ENCODE measurements at regions of chr1 and their contacts with region 1.

Region 1: GRCh38 chr1:212608209-212608955 is at the start of gene ATF3:
- DNase-seq: peak; percentile 100
- H3K4me3 Mint-ChIP-seq: peak within 1 kb of the TSS; percentile 72
- H3K27ac Mint-ChIP-seq: peak within 1 kb of the TSS; percentile 98
- H3K4me1 Mint-ChIP-seq: peaks cover 37% of the 10 kb centered on the region
- H3K27me3 Mint-ChIP-seq: peaks cover 75% of the 10 kb centered on the region
- CTCF ChIP-seq: no peak
- total RNA-seq, gene ATF3: 85.3 and 114 TPM in 2 replicates

Region 2: DNA sequence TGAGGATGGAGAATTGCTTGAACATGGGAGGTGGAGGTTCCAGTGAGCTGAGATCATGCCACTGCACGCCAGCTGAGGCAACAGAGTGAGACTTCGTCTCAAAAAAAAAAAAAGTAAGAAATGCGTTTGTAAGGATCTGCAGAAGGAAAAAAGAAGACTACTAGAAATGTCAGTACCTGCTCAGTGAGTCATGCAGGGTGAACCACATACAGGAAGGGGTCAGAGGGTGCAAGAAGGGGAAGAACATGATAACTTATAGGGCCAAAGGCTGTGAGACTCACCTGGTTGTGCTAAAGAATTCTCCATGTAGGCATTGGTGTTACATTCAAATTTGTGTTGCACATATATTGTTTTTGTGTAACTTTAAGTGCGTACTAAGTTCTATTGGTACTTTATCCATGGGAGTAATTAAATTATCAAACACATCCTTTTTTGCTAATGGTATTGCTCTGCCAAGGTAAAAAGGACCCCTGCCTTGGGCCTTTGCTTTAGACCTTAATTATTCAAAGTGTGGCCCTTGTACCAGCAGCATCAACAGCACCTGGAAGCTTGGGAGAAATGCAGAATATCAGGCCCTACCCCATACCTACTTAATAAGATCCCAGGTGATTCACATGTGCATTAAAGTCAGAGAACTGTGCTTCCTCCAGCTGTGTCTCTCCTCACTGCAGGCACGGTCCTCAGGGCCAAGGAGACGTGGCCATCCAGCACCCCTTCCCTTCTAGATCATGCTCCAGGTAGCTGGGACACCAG is 419.6 kb before region 1 on chr1:
- CTCF ChIA-PET with region 1: no interaction called
- POLR2A ChIA-PET with region 1: no interaction called
- intact Hi-C with region 1: no loop called
- DNase-seq: peak; percentile 59
- H3K4me3 Mint-ChIP-seq: no peak overlapping the region
- H3K27ac Mint-ChIP-seq: no peak overlapping the region
- H3K4me1 Mint-ChIP-seq: peaks cover 11% of the 10 kb centered on the region
- H3K27me3 Mint-ChIP-seq: no peaks in the 10 kb centered on the region
- CTCF ChIP-seq: no peak

Region 3: GRCh38 chr1:212498283-212499040 is 109.9 kb before region 1 on chr1:
- CTCF ChIA-PET with region 1: no interaction called
- POLR2A ChIA-PET with region 1: interaction called, 26 read pairs
- intact Hi-C with region 1: no loop called
- DNase-seq: peak; percentile 96
- H3K4me3 Mint-ChIP-seq: no peak overlapping the region
- H3K27ac Mint-ChIP-seq: no peak overlapping the region
- H3K4me1 Mint-ChIP-seq: peaks cover 15% of the 10 kb centered on the region
- H3K27me3 Mint-ChIP-seq: no peaks in the 10 kb centered on the region
- CTCF ChIP-seq: no peak

Region 4: GRCh38 chr1:212566522-212567479 is 41.6 kb before region 1 on chr1:
- CTCF ChIA-PET with region 1: interaction called, 14 read pairs
- POLR2A ChIA-PET with region 1: interaction called, 86 read pairs
- intact Hi-C with region 1: loop called (anchors 1 kb)
- DNase-seq: peak; percentile 94
- H3K4me3 Mint-ChIP-seq: peak overlapping the region; percentile 72
- H3K27ac Mint-ChIP-seq: peak overlapping the region; percentile 78
- H3K4me1 Mint-ChIP-seq: peaks cover 17% of the 10 kb centered on the region
- H3K27me3 Mint-ChIP-seq: no peaks in the 10 kb centered on the region
- CTCF ChIP-seq: no peak

Region 5: GRCh38 chr1:212621951-212622305 is 13.5 kb after region 1 on chr1:
- CTCF ChIA-PET with region 1: interaction called, 15 read pairs
- POLR2A ChIA-PET with region 1: interaction called, 34 read pairs
- intact Hi-C with region 1: no loop called
- DNase-seq: no peak
- H3K4me3 Mint-ChIP-seq: no peak overlapping the region
- H3K27ac Mint-ChIP-seq: no peak overlapping the region
- H3K4me1 Mint-ChIP-seq: no peaks in the 10 kb centered on the region
- H3K27me3 Mint-ChIP-seq: peaks cover 30% of the 10 kb centered on the region
- CTCF ChIP-seq: no peak

Region 6: DNA sequence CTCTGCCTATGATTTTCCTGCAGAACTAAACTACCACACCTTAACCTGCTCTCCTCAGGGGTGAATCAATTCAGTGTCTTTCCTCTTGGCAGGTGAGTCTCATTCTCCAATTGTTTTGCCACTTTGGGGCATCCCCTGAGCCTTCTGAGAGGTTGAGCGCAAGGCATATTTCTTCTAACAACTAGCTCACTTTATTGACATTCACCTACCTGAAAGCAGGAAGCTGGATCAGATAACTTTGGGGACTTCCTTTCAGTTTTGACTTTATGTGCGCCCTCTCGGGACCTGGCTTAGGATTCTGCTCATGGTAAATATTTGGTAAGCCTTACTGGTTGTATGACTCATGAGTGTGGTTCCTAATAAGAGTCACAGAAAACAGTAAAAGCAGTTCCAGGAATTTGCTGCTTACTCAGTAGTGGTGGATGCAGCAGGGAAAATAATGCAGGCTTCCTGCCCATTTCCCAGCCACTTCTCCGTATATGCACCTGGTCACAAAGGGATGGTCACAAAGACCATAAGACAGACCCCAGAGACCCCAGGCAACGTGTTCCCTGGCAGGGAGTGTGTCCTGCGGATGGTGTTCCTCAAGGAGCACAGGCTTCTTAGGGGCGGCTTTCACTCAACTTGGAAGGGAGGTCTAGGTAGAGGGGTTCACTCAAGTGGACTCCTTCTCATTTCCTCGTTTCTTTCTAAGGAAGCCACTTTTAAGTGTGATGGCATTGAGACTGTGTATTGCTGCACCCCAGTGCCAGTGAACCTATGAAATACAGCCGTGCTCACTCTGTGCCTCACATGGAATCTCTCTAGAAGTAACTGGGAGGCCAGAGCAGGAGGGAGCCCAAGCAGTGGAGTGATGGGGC is 113.2 kb after region 1 on chr1:
- CTCF ChIA-PET with region 1: interaction called, 3 read pairs
- POLR2A ChIA-PET with region 1: interaction called, 10 read pairs
- intact Hi-C with region 1: no loop called
- DNase-seq: peak; percentile 91
- H3K4me3 Mint-ChIP-seq: peak overlapping the region; percentile 51
- H3K27ac Mint-ChIP-seq: peak overlapping the region; percentile 21
- H3K4me1 Mint-ChIP-seq: peaks cover 18% of the 10 kb centered on the region
- H3K27me3 Mint-ChIP-seq: peaks cover 24% of the 10 kb centered on the region
- CTCF ChIP-seq: no peak

Region 7: GRCh38 chr1:212857992-212858460 is 249.6 kb after region 1 on chr1 and contains the start of gene FLVCR1:
- CTCF ChIA-PET with region 1: no interaction called
- POLR2A ChIA-PET with region 1: interaction called, 11 read pairs
- intact Hi-C with region 1: no loop called
- DNase-seq: peak; percentile 100
- H3K4me3 Mint-ChIP-seq: no peak within 1 kb of the TSS
- H3K27ac Mint-ChIP-seq: peak within 1 kb of the TSS; percentile 99
- H3K4me1 Mint-ChIP-seq: peaks cover 11% of the 10 kb centered on the region
- H3K27me3 Mint-ChIP-seq: no peaks in the 10 kb centered on the region
- CTCF ChIP-seq: no peak
- total RNA-seq, gene FLVCR1: 16.5 and 17.9 TPM in 2 replicates